Activated T-helper 2 cell treated with anti-CD3 and anti-CD28 coated beads, Interferon-gamma antibody, Interleukin-2, Interleukin-4, amounts not matched to agents 10 μg/mL and 5 μg/mL and 100 μg/mL, durations not matched to agents 14 hours and 24 hours and 36 hours (primary cell): ENCODE measurements at regions of chr11 and their contacts with region 1.

Region 1: DNA sequence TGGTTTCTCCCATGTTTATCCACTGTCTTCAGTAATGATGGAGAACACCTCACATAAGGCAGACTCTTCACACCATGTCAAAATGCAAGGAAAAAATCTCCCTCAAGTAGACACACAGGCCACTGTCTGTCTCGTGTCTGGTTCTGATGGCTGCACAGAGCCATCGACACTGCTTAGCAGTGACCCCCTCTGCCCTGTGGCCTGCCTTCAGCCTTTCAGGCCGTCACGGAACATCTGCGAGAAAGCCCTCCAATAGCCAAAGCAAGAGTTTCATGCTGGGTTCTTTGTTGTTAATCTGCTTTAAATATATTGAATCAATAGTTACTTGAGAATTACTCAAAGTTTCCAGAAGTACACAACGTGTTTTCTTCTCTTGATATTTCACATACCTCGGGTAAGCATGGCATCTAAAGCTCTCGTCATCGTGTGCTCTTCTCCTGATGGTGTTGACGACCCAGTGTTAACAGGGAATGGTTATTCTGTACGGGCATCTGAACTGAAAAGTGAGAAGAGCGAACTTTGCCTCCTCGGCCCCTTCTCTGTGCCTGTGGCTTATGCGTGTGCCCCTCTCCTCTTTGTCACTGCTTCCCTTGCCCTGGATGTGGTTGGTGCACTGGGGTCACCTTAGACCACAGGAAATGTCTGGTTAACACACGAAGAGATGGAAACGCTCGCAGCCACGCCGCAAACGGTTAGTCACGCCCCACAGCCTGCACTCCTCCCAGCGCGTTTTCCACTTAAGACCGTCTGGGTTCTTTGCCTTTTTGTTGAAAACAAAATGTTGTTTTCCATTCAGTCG is 33.4 kb upstream of the CTTN start:
- DNase-seq: peak; percentile 68
- H3K4me3 Mint-ChIP-seq: peak overlapping the region; percentile 70
- H3K27ac Mint-ChIP-seq: peak overlapping the region; percentile 94
- H3K4me1 Mint-ChIP-seq: peaks cover 31% of the 10 kb centered on the region
- H3K27me3 Mint-ChIP-seq: no peaks in the 10 kb centered on the region

Region 2: DNA sequence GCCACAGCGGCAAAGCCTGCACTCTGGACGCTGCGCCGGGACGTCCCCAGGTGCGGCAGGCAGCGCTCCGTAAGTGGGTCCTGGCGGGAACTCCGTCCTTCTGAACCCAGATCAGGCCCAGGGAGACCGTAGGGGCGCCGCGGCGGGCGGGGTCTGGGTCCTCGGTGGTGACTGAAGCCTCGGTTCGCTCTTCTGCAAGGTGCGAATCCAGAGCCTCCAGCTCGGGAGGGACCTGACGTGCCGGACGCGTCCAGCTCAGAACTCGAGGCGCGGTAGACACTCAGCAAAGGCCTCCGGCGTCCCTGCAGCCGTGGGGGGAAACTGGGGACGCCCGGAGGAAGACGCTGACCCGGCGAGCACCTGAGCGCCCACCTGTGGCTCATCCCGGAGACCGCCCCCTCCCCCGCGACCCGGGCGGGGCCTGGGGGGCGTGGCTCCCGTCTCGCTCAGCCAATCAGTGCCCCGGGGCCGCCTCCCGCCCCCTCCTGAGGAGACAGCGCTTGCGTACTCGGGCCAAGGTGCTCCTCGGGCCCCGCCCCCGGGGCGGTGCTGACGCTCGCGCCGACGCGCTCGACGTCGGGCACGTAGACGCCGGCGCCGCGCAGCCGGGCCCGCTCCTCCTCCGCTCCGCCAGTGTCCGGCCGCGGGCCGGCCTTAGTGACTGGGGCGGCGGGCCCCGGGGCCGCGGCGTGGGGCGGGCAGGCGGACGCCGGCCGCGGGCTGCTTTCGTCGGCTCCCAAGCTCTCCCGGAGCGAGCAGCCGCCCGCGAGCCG is 94.7 kb before region 1 on chr11 and contains the start of gene PPFIA1:
- intact Hi-C with region 1: loop called (anchors 10 kb)
- DNase-seq: peak; percentile 92
- H3K4me3 Mint-ChIP-seq: peak within 1 kb of the TSS; percentile 82
- H3K27ac Mint-ChIP-seq: peak within 1 kb of the TSS; percentile 88
- H3K4me1 Mint-ChIP-seq: peaks cover 26% of the 10 kb centered on the region
- H3K27me3 Mint-ChIP-seq: peaks cover 23% of the 10 kb centered on the region
- total RNA-seq, gene PPFIA1: 47.1 and 47.4 TPM in 2 replicates

Region 3: DNA sequence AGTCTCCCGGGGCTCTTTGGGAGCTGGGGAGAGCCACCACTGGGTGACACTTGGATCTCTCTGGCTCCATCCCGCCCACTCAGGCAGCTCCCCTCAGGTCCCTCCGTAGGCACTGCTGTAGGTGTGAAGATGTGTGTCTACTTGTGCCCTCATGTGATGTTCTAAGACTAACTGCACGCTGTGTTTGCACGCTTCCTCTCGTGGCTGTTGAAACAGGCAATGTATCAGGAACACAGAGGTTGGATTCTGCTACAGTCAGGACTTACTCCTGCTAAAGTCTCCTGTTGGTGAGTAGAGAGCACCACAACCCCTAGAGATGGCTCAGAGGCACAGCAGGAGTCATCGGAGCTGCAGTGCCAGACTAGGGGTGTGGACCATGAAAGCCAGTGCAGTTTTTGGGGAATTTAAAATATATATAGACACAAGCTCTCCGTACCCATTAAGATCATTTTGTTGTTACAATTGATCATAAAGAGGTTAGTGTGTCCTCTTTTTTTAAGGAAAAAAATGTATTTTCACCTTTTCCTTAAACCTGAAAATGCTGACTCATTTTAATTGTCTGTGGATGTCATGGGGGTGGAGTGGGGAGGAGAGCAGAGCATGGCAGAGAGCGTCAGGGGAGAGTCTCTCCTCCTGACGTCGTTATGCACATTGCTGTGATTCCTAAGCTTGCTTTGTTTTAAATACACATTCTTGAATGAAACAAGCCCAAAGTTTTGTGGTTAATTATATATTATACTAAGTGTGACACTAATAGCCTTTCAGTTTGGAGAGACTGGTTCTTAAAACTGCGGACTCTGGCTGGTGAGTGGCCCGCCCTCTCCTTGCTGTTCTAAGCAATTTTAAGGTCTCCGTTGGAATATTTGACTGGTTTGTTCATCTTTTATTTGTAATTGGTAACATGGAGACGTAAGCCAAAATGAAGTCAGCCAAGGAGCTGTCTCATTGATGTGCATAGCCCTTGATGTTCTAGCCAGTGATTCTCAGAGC is 17.2 kb after region 1 on chr11:
- intact Hi-C with region 1: no loop called
- DNase-seq: no peak
- H3K4me3 Mint-ChIP-seq: no peak overlapping the region
- H3K27ac Mint-ChIP-seq: no peak overlapping the region
- H3K4me1 Mint-ChIP-seq: no peaks in the 10 kb centered on the region
- H3K27me3 Mint-ChIP-seq: no peaks in the 10 kb centered on the region

Region 4: GRCh38 chr11:70397983-70398833 is 33.3 kb after region 1 on chr11 and contains the start of gene CTTN:
- intact Hi-C with region 1: loop called (anchors 1 kb)
- DNase-seq: peak; percentile 54
- H3K4me3 Mint-ChIP-seq: peak within 1 kb of the TSS; percentile 83
- H3K27ac Mint-ChIP-seq: peak within 1 kb of the TSS; percentile 54
- H3K4me1 Mint-ChIP-seq: peaks cover 28% of the 10 kb centered on the region
- H3K27me3 Mint-ChIP-seq: peaks cover 51% of the 10 kb centered on the region
- total RNA-seq, gene CTTN: 33.4 and 34.9 TPM in 2 replicates

Region 5: DNA sequence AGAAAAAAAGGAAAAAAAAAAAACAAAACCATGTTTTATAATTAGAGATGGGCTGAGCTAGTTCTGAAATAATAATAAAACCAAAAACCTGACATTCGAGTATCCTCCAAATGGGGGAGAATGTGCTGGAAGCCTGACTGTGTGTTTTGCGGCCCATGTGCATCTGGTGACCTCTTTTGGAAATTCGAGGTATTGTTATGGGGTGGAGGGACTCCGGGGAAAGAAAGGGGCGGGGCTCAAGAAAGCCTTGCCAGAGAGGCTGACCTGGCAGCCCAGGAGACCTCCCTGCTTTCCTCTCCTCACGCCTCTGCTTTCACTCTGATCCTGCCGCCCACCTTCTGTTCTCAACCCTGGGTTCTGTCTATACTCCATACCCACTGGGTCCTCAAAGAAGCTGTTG is 106.3 kb after region 1 on chr11:
- intact Hi-C with region 1: no loop called
- DNase-seq: no peak
- H3K4me3 Mint-ChIP-seq: no peak overlapping the region
- H3K27ac Mint-ChIP-seq: no peak overlapping the region
- H3K4me1 Mint-ChIP-seq: peaks cover 1% of the 10 kb centered on the region
- H3K27me3 Mint-ChIP-seq: peaks cover 17% of the 10 kb centered on the region